ENCODE measurements at regions of chr10 and their contacts with region 1.

Region 1: DNA sequence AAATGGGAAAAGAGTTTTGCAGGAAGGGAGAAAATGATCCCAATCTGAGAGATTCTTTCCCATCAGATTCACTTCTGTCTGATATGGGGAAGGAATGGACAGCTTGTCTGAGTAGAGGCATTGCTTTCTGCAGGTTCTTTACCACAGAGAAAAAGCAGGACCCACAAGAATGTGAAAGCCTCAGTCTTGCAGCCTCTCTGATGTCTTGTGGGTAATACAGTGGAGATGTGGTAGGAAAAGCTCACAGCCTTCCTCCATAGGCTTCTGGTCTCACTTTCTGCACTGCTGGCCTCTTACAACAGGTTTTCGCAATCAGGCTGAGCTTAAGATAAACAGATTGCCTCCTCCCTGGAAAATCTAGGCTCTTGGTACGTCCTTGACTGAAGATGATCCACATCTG is 551 bp downstream of the IFIT1 start:
- DNase-seq: peak; percentile 38 to 40
- H3K4me3 ChIP-seq: no peak overlapping the region
- H3K4me3 Mint-ChIP-seq: peak overlapping the region; percentile 66
- H3K27ac Mint-ChIP-seq: no peak overlapping the region
- H3K4me1 ChIP-seq: peaks cover 9% of the 10 kb centered on the region; the same call in 1 of the 2 replicates
- H3K4me1 Mint-ChIP-seq: peaks cover 9% of the 10 kb centered on the region
- H3K27me3 ChIP-seq: no peaks in the 10 kb centered on the region
- H3K27me3 Mint-ChIP-seq: no peaks in the 10 kb centered on the region
- CTCF ChIP-seq: no peak

Region 2: GRCh38 chr10:89217057-89217990 is 175.7 kb before region 1 on chr10:
- CTCF ChIA-PET with region 1: no interaction called
- POLR2A ChIA-PET with region 1: no interaction called
- intact Hi-C with region 1: loop called (anchors 1 kb)
- DNase-seq: peak in 1 of 2 experiments; percentile 57
- H3K4me3 ChIP-seq: no peak overlapping the region
- H3K4me3 Mint-ChIP-seq: no peak overlapping the region
- H3K27ac Mint-ChIP-seq: no peak overlapping the region
- H3K4me1 ChIP-seq: 0 out of 2 replicates have a peak, but pooled peaks cover 4% of the 10 kb centered on the region
- H3K4me1 Mint-ChIP-seq: no peaks in the 10 kb centered on the region
- H3K27me3 ChIP-seq: no peaks in the 10 kb centered on the region
- H3K27me3 Mint-ChIP-seq: no peaks in the 10 kb centered on the region
- CTCF ChIP-seq: peak; percentile 63 to 64

Region 3: DNA sequence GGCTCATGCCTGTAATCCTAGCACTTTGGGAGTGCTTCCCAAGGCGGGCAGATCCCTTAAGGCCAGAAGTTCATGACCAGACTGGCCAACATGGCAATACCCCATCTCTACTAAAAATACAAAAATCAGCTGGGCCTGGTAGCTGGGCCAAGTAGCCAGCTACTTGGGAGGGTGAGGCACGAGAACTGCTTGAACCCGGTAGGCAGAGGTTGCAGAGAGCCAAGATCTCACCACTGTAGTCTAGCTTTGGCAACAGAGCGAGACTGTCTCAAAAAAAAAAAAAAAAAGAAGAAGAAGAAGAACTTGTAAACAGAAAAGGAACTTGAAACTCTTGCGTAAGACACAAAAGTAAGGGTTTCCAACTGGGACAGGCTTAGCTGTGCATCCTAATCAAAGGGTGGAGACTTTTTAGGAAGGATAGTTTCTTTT is 96.7 kb before region 1 on chr10:
- CTCF ChIA-PET with region 1: no interaction called
- POLR2A ChIA-PET with region 1: no interaction called
- intact Hi-C with region 1: loop called (anchors 1 kb)
- DNase-seq: no peak
- H3K4me3 ChIP-seq: no peak overlapping the region
- H3K4me3 Mint-ChIP-seq: no peak overlapping the region
- H3K27ac Mint-ChIP-seq: no peak overlapping the region
- H3K4me1 ChIP-seq: peaks cover 9% of the 10 kb centered on the region
- H3K4me1 Mint-ChIP-seq: no peaks in the 10 kb centered on the region
- H3K27me3 ChIP-seq: no peaks in the 10 kb centered on the region
- H3K27me3 Mint-ChIP-seq: no peaks in the 10 kb centered on the region
- CTCF ChIP-seq: no peak

Region 4: DNA sequence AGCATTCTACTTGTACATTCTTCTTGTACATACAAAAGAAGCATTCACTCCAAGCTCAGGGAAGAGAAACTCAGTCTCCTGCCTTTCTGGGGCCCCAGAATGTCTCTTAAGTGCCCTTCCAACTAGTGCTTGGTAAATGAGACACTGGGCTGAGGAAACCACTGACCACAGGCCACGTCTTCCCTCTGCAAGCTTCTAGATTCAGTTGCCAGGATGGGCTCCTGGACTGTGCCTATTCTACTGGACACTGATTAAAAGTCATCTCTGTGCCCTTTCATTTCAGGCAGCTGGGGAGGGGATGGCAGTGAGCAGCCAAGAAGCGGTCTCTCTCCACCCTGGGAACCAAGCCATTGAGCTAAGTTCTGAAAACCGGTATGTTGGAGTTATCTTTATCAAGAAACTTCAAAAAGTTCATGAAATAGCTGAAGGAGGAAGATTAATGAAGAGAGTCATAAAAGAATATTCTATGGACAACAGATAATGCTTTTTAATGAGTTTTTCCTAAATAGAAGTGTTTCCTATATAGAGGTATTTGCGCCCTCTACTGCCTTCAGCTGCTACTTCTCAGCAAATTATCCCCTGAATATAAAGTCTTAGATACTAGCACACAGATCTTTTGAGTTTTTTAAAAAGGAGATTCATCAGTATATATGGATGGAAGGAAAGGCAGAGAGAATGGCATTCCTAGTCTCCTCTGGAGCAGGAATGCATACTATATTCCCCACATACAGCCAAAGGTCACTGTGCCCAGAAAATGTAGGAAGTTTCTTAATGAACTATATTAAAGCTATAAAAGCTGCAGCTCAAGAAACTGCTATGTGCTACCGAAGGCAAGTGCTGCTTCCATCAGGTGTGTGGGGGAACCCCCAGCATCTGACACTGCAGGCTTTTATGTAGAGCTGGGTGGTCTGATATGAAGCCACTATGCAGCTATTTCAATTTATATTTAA is 23.5 kb before region 1 on chr10:
- CTCF ChIA-PET with region 1: interaction called, 3 read pairs
- POLR2A ChIA-PET with region 1: no interaction called
- intact Hi-C with region 1: loop called (anchors 1 kb)
- DNase-seq: no peak
- H3K4me3 ChIP-seq: no peak overlapping the region
- H3K4me3 Mint-ChIP-seq: no peak overlapping the region
- H3K27ac Mint-ChIP-seq: no peak overlapping the region
- H3K4me1 ChIP-seq: peaks cover 25% of the 10 kb centered on the region
- H3K4me1 Mint-ChIP-seq: peaks cover 20% of the 10 kb centered on the region
- H3K27me3 ChIP-seq: no peaks in the 10 kb centered on the region
- H3K27me3 Mint-ChIP-seq: no peaks in the 10 kb centered on the region
- CTCF ChIP-seq: peak; percentile 53 to 54

Region 5: GRCh38 chr10:89414146-89414878 is 21.3 kb after region 1 on chr10 and contains the start of gene IFIT5:
- CTCF ChIA-PET with region 1: no interaction called
- POLR2A ChIA-PET with region 1: no interaction called
- intact Hi-C with region 1: loop called (anchors 1 kb)
- DNase-seq: peak; percentile 44 to 68
- H3K4me3 ChIP-seq: peak within 1 kb of the TSS; percentile 53
- H3K4me3 Mint-ChIP-seq: peak within 1 kb of the TSS; percentile 77
- H3K27ac Mint-ChIP-seq: peak within 1 kb of the TSS; percentile 26
- H3K4me1 ChIP-seq: peaks cover 4% of the 10 kb centered on the region; the same call in 1 of the 2 replicates
- H3K4me1 Mint-ChIP-seq: no peaks in the 10 kb centered on the region
- H3K27me3 ChIP-seq: no peaks in the 10 kb centered on the region
- H3K27me3 Mint-ChIP-seq: no peaks in the 10 kb centered on the region
- CTCF ChIP-seq: no peak
- total RNA-seq, gene IFIT5: 2.3 and 2.4 TPM in 2 replicates